ENCODE measurements at regions of chr10 and their contacts with region 1.

Region 1: GRCh38 chr10:62816331-62817120 is at the start of gene EGR2:
- DNase-seq: peak; percentile 93 to 96 (median 95)
- ATAC-seq: peak; percentile 88
- H3K4me3 ChIP-seq: peak within 1 kb of the TSS; percentile 92
- H3K4me1 ChIP-seq: peaks cover 27% of the 10 kb centered on the region
- CTCF ChIP-seq: no peak
- total RNA-seq, gene EGR2: 0.36 to 5.5 (median 0.75) TPM

Region 2: DNA sequence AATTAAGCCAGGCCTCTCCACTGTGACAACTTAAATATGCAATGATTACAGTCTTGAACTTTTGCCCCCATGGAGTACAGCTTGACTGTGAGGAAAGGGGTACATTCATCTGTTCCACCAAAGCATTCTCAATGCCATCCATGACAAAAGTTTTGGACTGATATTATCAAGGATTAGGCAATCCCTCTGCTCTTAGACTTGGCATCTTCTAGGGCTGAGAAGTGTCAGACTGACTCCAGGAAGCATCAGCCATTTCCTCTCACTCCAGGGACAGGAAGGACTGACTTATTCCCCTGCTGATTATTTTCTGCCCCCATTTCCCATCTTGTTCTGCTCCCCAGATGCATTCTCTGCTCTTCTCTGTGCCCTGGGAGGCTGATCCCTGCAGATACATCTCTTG is 372.7 kb before region 1 on chr10:
- intact Hi-C with region 1: loop called in 1 of 2 experiments (anchors 5 kb)
- DNase-seq: no peak
- ATAC-seq: no peak
- H3K4me3 ChIP-seq: no peak overlapping the region
- H3K4me1 ChIP-seq: no peaks in the 10 kb centered on the region
- CTCF ChIP-seq: no peak

Region 3: GRCh38 chr10:62707810-62708209 is 108.7 kb before region 1 on chr10:
- intact Hi-C with region 1: no loop called
- DNase-seq: no peak
- ATAC-seq: no peak
- H3K4me3 ChIP-seq: no peak overlapping the region
- H3K4me1 ChIP-seq: no peaks in the 10 kb centered on the region
- CTCF ChIP-seq: no peak

Region 4: DNA sequence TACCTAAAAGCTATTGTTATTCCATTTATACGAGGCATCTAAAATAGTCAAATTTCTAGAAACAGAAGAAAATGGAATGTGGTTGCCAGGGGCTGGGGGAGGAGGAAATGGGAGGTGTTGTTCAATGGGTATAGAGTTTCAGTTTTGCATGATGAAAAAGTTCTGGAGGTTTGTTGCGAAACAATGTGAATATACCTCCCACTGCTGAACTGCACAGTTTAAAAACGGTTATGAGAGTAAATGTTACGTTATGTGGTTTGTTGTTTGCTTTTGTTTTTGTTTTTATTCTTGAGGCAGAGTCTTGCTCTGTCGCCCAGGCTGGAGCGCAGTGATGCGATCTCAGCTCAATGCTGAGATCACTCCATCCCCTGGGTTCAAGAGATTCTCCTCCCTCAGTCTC is 251.7 kb after region 1 on chr10:
- intact Hi-C with region 1: no loop called
- DNase-seq: no peak
- ATAC-seq: no peak
- H3K4me3 ChIP-seq: no peak overlapping the region
- H3K4me1 ChIP-seq: no peaks in the 10 kb centered on the region
- CTCF ChIP-seq: no peak